Activated B cell treated with CpG ODN at 0.5 μM for 24 hours (primary cell): ENCODE measurements at regions of chr6 and their contacts with region 1.

Region 1: DNA sequence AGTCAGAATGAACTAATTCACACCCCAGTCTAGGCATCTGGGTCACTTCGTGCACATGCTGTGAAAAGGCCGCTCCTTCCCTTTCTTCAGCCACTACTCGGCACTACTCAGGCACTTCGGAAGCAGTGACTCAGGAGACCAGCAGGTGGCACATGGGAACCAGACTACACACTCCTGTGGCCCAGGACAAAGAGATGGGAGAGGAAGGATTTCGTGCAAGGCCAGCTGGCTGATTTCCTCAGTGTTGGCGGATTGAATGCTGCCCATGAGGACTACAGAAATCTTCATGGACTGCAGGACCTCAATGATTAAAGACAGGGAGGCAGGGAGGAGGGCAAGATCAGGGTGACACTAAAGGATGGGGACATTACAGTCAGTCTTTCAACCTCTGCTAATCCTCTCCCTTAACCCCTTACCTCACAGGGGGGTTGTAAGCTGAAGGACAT is 117.8 kb upstream of the SPACA1 start:
- DNase-seq: peak; percentile 49
- ATAC-seq: peak; percentile 77
- H3K4me3 Mint-ChIP-seq: no peak overlapping the region
- H3K27ac Mint-ChIP-seq: no peak overlapping the region
- H3K4me1 Mint-ChIP-seq: peaks cover 30% of the 10 kb centered on the region
- H3K27me3 Mint-ChIP-seq: no peaks in the 10 kb centered on the region
- CTCF ChIP-seq: peak; percentile 32

Region 2: DNA sequence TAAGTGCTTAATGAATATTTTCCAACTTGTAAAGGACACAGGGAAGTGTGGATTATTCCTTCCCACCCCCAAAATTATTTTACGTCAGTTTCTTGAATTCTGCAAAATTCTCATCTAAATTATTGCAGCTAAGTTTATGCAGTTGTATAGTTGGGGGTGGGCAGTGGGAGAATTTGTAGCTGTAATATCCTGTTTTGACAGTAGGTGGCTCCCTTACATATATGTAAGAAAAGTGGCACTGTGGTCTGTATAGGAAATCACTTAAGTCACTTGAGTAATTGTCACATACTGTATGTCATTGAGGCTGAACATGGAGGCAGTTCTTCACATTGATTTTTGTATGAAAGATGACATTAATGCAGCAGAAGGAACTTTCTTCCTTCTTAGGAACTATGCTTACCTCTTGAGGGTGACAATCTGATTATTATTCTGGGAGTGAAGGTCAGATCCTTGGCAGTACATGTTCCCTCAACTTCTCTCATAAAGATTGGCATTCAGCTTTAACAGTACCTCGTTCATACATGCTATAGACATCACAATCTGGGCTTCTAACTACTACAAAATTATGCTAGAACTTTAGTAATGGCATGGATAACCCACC is 536.7 kb before region 1 on chr6:
- CTCF ChIA-PET with region 1: interaction called, 3 read pairs
- POLR2A ChIA-PET with region 1: no interaction called
- intact Hi-C with region 1: loop called (anchors 1 kb)
- DNase-seq: no peak
- ATAC-seq: peak; percentile 94
- H3K4me3 Mint-ChIP-seq: no peak overlapping the region
- H3K27ac Mint-ChIP-seq: no peak overlapping the region
- H3K4me1 Mint-ChIP-seq: peaks cover 5% of the 10 kb centered on the region
- H3K27me3 Mint-ChIP-seq: no peaks in the 10 kb centered on the region
- CTCF ChIP-seq: peak; percentile 53

Region 3: GRCh38 chr6:87832025-87832825 is 97.6 kb before region 1 on chr6:
- CTCF ChIA-PET with region 1: interaction called, 27 read pairs
- POLR2A ChIA-PET with region 1: interaction called, 4 read pairs
- intact Hi-C with region 1: loop called (anchors 1 kb)
- DNase-seq: no peak
- ATAC-seq: peak; percentile 77
- H3K4me3 Mint-ChIP-seq: peak overlapping the region; percentile 85
- H3K27ac Mint-ChIP-seq: peak overlapping the region; percentile 78
- H3K4me1 Mint-ChIP-seq: peaks cover 11% of the 10 kb centered on the region
- H3K27me3 Mint-ChIP-seq: no peaks in the 10 kb centered on the region
- CTCF ChIP-seq: no peak

Region 4: GRCh38 chr6:88165844-88166492 is 236.1 kb after region 1 on chr6 and contains the start of gene CNR1:
- CTCF ChIA-PET with region 1: interaction called, 14 read pairs
- POLR2A ChIA-PET with region 1: interaction called, 8 read pairs
- intact Hi-C with region 1: loop called (anchors 1 kb)
- DNase-seq: no peak
- ATAC-seq: peak; percentile 59
- H3K4me3 Mint-ChIP-seq: peak within 1 kb of the TSS; percentile 91
- H3K27ac Mint-ChIP-seq: peak within 1 kb of the TSS; percentile 87
- H3K4me1 Mint-ChIP-seq: peaks cover 34% of the 10 kb centered on the region
- H3K27me3 Mint-ChIP-seq: peaks cover 15% of the 10 kb centered on the region
- CTCF ChIP-seq: no peak
- total RNA-seq, gene CNR1: 2.7 and 4.4 TPM in 2 replicates

Region 5: GRCh38 chr6:88616380-88616779 is 686.5 kb after region 1 on chr6:
- CTCF ChIA-PET with region 1: no interaction called
- POLR2A ChIA-PET with region 1: no interaction called
- intact Hi-C with region 1: loop called (anchors 10 kb)
- DNase-seq: no peak
- ATAC-seq: peak; percentile 43
- H3K4me3 Mint-ChIP-seq: peak overlapping the region; percentile 0
- H3K27ac Mint-ChIP-seq: peak overlapping the region; percentile 79
- H3K4me1 Mint-ChIP-seq: peaks cover 68% of the 10 kb centered on the region
- H3K27me3 Mint-ChIP-seq: no peaks in the 10 kb centered on the region
- CTCF ChIP-seq: no peak

Region 6: GRCh38 chr6:88780714-88781389 is 851.0 kb after region 1 on chr6:
- CTCF ChIA-PET with region 1: interaction called, 20 read pairs
- POLR2A ChIA-PET with region 1: no interaction called
- intact Hi-C with region 1: loop called (anchors 1 kb)
- DNase-seq: no peak
- ATAC-seq: peak; percentile 83
- H3K4me3 Mint-ChIP-seq: no peak overlapping the region
- H3K27ac Mint-ChIP-seq: no peak overlapping the region
- H3K4me1 Mint-ChIP-seq: peaks cover 16% of the 10 kb centered on the region
- H3K27me3 Mint-ChIP-seq: no peaks in the 10 kb centered on the region
- CTCF ChIP-seq: no peak